Activated CD4-positive, alpha-beta T cell treated with anti-CD3 and anti-CD28 coated beads, Interleukin-2, amount 10 ng/mL, durations not matched to agents 24 days and 14 days (primary cell): ENCODE measurements at regions of chr5 and their contacts with region 1.

Region 1: GRCh38 chr5:146475190-146475801 is 28.2 kb downstream of the TCERG1 start:
- DNase-seq: no peak
- H3K4me3 Mint-ChIP-seq: no peak overlapping the region
- H3K27ac Mint-ChIP-seq: no peak overlapping the region
- H3K4me1 Mint-ChIP-seq: peaks cover 4% of the 10 kb centered on the region
- H3K27me3 Mint-ChIP-seq: no peaks in the 10 kb centered on the region

Region 2: GRCh38 chr5:146510559-146511125 is 35.3 kb after region 1 on chr5:
- intact Hi-C with region 1: loop called (anchors 5 kb)
- DNase-seq: peak; percentile 35
- H3K4me3 Mint-ChIP-seq: no peak overlapping the region
- H3K27ac Mint-ChIP-seq: no peak overlapping the region
- H3K4me1 Mint-ChIP-seq: no peaks in the 10 kb centered on the region
- H3K27me3 Mint-ChIP-seq: no peaks in the 10 kb centered on the region

Region 3: GRCh38 chr5:146574713-146575112 is 99.4 kb after region 1 on chr5:
- intact Hi-C with region 1: no loop called
- DNase-seq: no peak
- H3K4me3 Mint-ChIP-seq: no peak overlapping the region
- H3K27ac Mint-ChIP-seq: no peak overlapping the region
- H3K4me1 Mint-ChIP-seq: no peaks in the 10 kb centered on the region
- H3K27me3 Mint-ChIP-seq: peaks cover 5% of the 10 kb centered on the region